Gastrocnemius medialis (tissue), 4 donors: ENCODE measurements at regions of chr5 and their contacts with region 1.

Region 1: GRCh38 chr5:41856644-41857491 is 13.4 kb downstream of the OXCT1 start:
- DNase-seq: peak in 1 of 2 donors; percentile 17
- ATAC-seq: peak; percentile 88 to 95
- H3K4me3 ChIP-seq: no peak overlapping the region
- H3K27ac ChIP-seq: no peak overlapping the region
- H3K4me1 ChIP-seq: no peaks in the 10 kb centered on the region
- H3K27me3 ChIP-seq: no peaks in the 10 kb centered on the region
- CTCF ChIP-seq: peak; percentile 62 to 81 (median 76)
- POLR2A ChIP-seq: no peak

Region 2: DNA sequence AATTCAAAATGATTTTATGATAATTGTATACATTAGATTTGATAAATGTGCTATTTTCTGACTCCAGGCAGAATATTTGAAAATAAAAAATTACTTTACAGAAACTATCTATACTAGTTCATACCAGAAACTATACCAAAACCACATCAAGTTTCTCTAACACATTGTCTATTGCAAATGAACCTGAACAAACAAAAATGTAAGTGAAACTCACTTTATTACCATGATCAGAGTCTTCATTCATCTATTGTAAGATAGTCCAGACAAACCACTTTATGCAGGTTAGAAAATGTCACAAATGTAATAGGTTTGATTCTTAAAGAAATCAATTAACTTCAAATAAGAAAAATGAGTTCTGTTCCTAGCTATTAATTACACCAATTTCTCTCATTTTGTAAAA is 86.1 kb before region 1 on chr5:
- in situ Hi-C with region 1: no loop called
- intact Hi-C with region 1: no loop called
- DNase-seq: no peak
- ATAC-seq: no peak
- H3K4me3 ChIP-seq: no peak overlapping the region
- H3K27ac ChIP-seq: no peak overlapping the region
- H3K4me1 ChIP-seq: no peaks in the 10 kb centered on the region
- H3K27me3 ChIP-seq: no peaks in the 10 kb centered on the region
- CTCF ChIP-seq: no peak
- POLR2A ChIP-seq: no peak

Region 3: GRCh38 chr5:41924872-41925554 is 68.1 kb after region 1 on chr5 and contains the start of gene FBXO4:
- in situ Hi-C with region 1: loop called in 1 of 4 experiments (anchors 10 kb)
- intact Hi-C with region 1: loop called (anchors 1 kb)
- DNase-seq: peak; percentile 67 to 78
- ATAC-seq: peak; percentile 93 to 94
- H3K4me3 ChIP-seq: peak within 1 kb of the TSS; percentile 61 to 97 (median 84)
- H3K27ac ChIP-seq: peak within 1 kb of the TSS; percentile 86 to 97 (median 90)
- H3K4me1 ChIP-seq: peaks cover 0 to 22% of the 10 kb centered on the region in 2 donors
- H3K27me3 ChIP-seq: no peaks in the 10 kb centered on the region
- CTCF ChIP-seq: peak; percentile 13 to 65 (median 51)
- POLR2A ChIP-seq: peak; percentile 34 to 48
- total RNA-seq, gene FBXO4: 1.8 to 4.7 (median 3.1) TPM

Region 4: DNA sequence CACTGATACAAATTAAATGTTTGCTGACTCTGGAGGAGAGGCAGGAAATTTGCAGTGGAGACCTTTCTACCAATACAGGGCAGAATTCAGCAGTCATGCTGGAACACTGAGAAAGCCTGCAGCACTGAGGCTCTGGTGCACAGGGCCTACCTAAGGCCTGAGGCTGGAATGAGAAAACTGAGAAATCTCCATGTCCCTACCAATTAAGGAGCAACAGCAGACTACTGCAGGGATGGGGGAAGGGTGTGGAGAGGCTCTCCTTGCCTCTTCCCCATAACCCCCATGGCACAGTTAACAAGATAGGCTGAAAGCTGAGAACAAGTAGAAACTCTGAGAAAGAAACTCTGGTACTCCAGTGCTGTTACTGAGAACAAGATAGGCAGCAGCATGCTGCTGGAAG is 78.7 kb after region 1 on chr5:
- in situ Hi-C with region 1: loop called in 1 of 4 experiments (anchors 10 kb)
- intact Hi-C with region 1: loop called (anchors 1 kb)
- DNase-seq: no peak
- ATAC-seq: no peak
- H3K4me3 ChIP-seq: no peak overlapping the region
- H3K27ac ChIP-seq: no peak overlapping the region
- H3K4me1 ChIP-seq: no peaks in the 10 kb centered on the region
- H3K27me3 ChIP-seq: no peaks in the 10 kb centered on the region
- CTCF ChIP-seq: no peak
- POLR2A ChIP-seq: no peak

Region 5: DNA sequence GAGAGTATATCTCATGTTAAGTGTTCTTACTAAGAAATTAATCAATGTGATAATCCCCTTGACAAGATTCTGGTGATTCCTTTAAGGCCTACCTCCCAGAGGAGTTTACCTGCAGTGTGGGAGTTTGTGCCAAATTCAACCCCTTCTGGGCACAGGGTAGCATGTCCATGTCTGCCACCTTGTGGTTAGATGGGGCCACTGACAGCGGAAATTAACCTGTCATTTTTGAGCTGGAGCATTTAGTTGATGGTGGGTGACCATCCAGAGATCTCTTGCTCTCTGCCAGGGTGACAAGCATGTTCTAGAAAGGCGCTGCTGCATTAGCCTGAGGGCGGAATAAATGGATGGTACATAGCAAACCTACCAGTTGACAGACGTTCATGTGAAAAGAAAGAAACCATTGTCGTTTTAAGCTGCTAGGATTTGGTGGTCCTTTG is 200.4 kb after region 1 on chr5:
- in situ Hi-C with region 1: loop called (anchors 5 to 25 kb)
- intact Hi-C with region 1: loop called (anchors 1 kb)
- DNase-seq: peak in 1 of 2 donors; percentile 19
- ATAC-seq: peak in 1 of 2 donors; percentile 44
- H3K4me3 ChIP-seq: no peak overlapping the region
- H3K27ac ChIP-seq: no peak overlapping the region
- H3K4me1 ChIP-seq: no peaks in the 10 kb centered on the region
- H3K27me3 ChIP-seq: no peaks in the 10 kb centered on the region
- CTCF ChIP-seq: peak in 4 of 5 experiments; percentile 42 to 71 (median 51)
- POLR2A ChIP-seq: no peak

Region 6: DNA sequence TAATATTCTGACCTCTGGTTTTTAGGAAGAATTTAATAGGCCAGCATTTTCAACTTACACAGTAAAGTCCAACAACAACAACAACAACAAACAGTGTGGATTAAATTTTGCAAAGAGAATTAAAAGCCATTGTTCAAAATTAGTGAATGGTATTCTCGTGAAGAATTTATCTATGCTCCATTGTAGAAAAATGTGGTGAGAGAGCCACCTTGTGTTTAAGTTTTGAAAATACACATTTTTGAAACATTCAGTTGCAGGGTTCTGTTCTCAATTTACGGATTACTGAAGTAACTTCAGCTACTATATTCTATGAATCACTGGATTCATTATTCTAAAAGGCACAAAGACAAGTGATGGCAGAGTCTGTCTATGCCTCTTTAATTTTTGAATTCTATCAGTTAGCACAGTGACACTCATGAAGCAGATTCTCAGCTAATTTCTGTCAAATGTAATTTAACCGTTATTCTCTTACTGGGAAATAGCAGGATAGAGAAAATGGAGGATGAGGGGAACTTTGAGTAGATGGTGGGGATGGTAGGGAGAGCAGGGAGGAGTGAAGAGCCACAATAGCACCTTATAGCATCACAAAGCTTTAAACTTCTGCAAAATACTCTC is 910.7 kb after region 1 on chr5:
- in situ Hi-C with region 1: loop called (anchors 5 to 25 kb)
- intact Hi-C with region 1: loop called (anchors 5 kb)
- DNase-seq: no peak
- ATAC-seq: no peak
- H3K4me3 ChIP-seq: no peak overlapping the region
- H3K27ac ChIP-seq: no peak overlapping the region
- H3K4me1 ChIP-seq: peaks cover 6% of the 10 kb centered on the region in 2 donors
- H3K27me3 ChIP-seq: no peaks in the 10 kb centered on the region
- CTCF ChIP-seq: peak; percentile 52 to 60 (median 58)
- POLR2A ChIP-seq: no peak

Region 7: DNA sequence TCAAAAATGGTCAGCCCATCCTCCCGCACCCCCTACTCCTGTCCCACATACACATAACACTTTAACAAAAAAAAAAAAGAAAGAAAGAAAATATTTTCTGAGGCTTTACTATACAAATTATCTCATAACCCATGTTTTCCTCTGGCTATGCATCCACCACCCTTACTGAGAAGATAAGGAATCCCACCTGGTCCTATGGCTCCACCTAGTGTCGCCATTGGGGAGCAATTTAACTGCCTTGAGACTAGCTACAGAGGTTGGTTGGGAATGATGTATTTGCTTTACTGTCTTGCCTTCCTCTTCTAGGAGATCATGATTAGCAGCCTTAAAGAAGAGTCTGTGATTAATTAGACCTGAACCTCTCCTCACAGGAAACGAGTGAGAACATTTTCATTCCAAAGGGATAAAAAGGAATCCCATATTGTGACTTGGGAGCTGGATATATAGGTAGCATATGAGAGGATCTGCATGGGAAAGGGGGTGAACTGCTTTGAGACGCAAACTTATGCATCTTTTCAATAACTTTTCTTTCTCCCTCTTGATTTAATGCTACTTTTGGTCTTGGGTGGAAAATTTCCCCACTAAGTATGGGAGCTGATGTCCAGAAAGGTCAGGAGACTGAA is 1032.6 kb after region 1 on chr5:
- in situ Hi-C with region 1: loop called (anchors 5 to 25 kb)
- intact Hi-C with region 1: loop called (anchors 2 kb)
- DNase-seq: peak; percentile 57 to 69
- ATAC-seq: peak; percentile 95 to 98
- H3K4me3 ChIP-seq: no peak overlapping the region
- H3K27ac ChIP-seq: no peak overlapping the region
- H3K4me1 ChIP-seq: no peaks in the 10 kb centered on the region
- H3K27me3 ChIP-seq: no peaks in the 10 kb centered on the region
- CTCF ChIP-seq: peak; percentile 70 to 96 (median 84)
- POLR2A ChIP-seq: no peak